ENCODE measurements at regions of chr22 and their contacts with region 1.

Region 1: DNA sequence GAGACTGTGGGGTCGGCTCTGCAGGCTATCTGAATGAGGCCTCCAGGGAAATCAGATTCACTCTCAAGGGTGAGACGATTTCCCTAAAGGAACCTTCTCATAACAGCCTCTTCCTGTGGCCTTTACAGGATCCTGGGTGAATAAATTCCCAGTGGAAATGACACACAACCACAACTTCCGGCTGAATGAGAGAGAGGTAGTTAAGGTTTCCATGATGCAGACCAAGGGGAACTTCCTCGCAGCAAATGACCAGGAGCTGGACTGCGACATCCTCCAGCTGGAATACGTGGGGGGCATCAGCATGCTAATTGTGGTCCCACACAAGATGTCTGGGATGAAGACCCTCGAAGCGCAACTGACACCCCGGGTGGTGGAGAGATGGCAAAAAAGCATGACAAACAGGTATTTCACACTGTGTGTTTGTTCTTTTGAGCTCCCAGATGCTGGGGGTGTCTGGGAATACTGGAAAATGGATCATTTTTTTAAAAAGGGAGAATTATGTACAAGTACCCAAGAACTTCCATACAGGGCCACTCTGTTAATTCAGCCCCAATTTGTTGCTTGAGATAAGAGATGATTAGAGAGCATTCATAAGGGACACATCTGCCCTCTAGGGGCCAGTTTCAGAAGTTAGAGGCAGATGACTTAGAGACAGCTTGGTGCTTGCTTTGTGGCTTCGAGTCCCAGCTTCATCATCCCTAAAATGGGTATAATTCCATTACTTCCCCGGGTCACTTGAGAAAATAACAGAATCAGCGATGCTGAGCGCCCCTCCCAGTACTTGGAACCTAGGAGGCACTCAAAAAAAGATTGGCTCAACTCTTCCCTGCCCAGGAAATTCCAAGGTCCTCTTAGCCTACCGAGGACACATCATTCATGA is 10.2 kb downstream of the SERPIND1 start:
- DNase-seq: peak; percentile 23 to 38
- H3K4me3 ChIP-seq: no peak overlapping the region
- H3K27ac ChIP-seq: no peak overlapping the region
- H3K4me1 ChIP-seq: peaks cover 30% of the 10 kb centered on the region
- H3K27me3 ChIP-seq: no peaks in the 10 kb centered on the region
- CTCF ChIP-seq: peak; percentile 66

Region 2: DNA sequence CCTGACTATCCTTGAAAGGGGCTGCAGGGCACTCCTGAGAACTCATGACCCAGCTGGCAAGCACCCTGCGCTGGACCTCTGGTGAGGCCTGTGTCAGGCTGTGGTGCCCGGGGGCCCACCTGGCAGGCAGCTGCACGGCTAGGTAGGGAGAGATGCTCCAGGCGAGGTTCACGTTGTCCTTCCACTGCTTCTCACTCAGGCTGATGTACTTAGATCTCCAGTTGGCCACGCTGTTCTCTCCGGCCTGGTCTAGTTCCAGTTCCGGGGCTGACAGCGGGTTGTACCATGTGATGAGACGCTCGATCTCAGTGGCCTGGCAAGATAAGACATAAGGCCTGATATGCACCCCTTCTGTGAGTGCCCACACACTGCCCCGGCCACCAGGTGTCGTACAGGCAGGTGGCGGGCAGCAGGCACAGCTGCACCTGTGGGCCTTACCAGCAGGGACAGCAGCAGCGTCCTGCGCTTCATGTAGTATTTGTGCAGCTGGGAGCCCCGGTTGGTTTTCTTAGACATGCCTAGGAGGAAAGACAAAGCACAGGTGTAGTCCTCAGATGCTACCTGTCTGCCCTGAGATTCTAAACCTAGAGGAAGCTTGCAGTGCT is 54.8 kb before region 1 on chr22:
- CTCF ChIA-PET with region 1: no interaction called
- POLR2A ChIA-PET with region 1: no interaction called
- intact Hi-C with region 1: loop called (anchors 2 kb)
- DNase-seq: no peak
- H3K4me3 ChIP-seq: no peak overlapping the region
- H3K27ac ChIP-seq: no peak overlapping the region
- H3K4me1 ChIP-seq: no peaks in the 10 kb centered on the region
- H3K27me3 ChIP-seq: no peaks in the 10 kb centered on the region
- CTCF ChIP-seq: no peak

Measured in PC-9 (cell line).